ENCODE measurements at regions of chr4 and their contacts with region 1.

Region 1: DNA sequence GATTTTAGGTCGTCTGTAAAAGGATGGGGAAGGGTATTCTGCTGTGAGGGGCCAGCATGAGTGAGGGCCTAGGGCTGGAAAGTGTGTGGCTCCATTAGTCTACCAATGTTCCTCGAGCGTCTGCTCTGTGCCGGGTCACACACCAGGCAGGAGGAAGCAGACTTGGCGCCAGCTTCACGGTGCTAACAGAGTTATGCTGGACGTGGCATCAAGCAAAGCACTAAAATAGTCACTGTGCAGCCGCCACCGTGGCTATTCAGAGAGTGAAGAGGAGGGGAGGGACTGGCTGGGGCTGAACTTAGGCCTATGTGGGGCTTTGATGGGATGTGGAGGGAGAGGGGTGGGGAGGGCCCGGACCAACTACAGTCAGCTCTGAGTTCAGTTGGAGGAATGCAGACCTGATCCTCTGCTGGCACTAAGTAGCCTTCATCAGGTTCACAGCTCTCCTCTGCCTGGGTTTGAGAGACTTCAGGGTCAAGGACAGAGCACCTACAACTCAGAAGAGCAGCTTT is 83.9 kb upstream of the MSX1 start:
- DNase-seq: no peak
- H3K4me3 ChIP-seq: no peak overlapping the region
- H3K27ac ChIP-seq: no peak overlapping the region
- H3K4me1 ChIP-seq: peaks cover 3% of the 10 kb centered on the region; the same call in 1 of the 2 replicates
- H3K27me3 ChIP-seq: no peaks in the 10 kb centered on the region
- CTCF ChIP-seq: no peak

Region 2: GRCh38 chr4:4762909-4763821 is 12.4 kb before region 1 on chr4:
- CTCF ChIA-PET with region 1: no interaction called
- POLR2A ChIA-PET with region 1: no interaction called
- intact Hi-C with region 1: loop called (anchors 1 kb)
- DNase-seq: peak in 1 of 2 experiments; percentile 95
- H3K4me3 ChIP-seq: peak overlapping the region; percentile 42; the same call in 1 of the 2 replicates
- H3K27ac ChIP-seq: peak overlapping the region; percentile 97
- H3K4me1 ChIP-seq: peaks cover 28% of the 10 kb centered on the region
- H3K27me3 ChIP-seq: no peaks in the 10 kb centered on the region
- CTCF ChIP-seq: no peak